Heart left ventricle (tissue), 16 donors: ENCODE measurements at regions of chr2 and their contacts with region 1.

Region 1: GRCh38 chr2:42792583-42793333 is at the start of gene HAAO:
- DNase-seq: peak; percentile 57 to 83 (median 65)
- ATAC-seq: peak in 3 of 4 donors; percentile 33 to 61 (median 39)
- H3K4me3 ChIP-seq: peak within 1 kb of the TSS; percentile 47 to 81 (median 60)
- H3K27ac ChIP-seq: peak within 1 kb of the TSS; percentile 69 to 97 (median 84)
- H3K4me1 ChIP-seq: peaks cover 0 to 44% (median 16%) of the 10 kb centered on the region in 12 donors
- H3K27me3 ChIP-seq: peaks cover 0 to 6% (median 0%) of the 10 kb centered on the region in 9 donors
- CTCF ChIP-seq: peak in 8 of 12 donors; percentile 5 to 41 (median 18)
- POLR2A ChIP-seq: peak in 1 of 2 donors; percentile 20
- total RNA-seq, gene HAAO: 1.3 to 10.6 (median 2.2) TPM

Region 2: GRCh38 chr2:42494355-42495233 is 298.2 kb before region 1 on chr2:
- intact Hi-C with region 1: loop called in 1 of 10 experiments (anchors 5 kb)
- DNase-seq: peak; percentile 44 to 69 (median 51)
- ATAC-seq: peak in 3 of 4 donors; percentile 58 to 72 (median 65)
- H3K4me3 ChIP-seq: peak overlapping the region; percentile 40 to 67 (median 56)
- H3K27ac ChIP-seq: no peak overlapping the region
- H3K4me1 ChIP-seq: peaks cover 0 to 22% (median 9%) of the 10 kb centered on the region in 12 donors
- H3K27me3 ChIP-seq: peaks cover 17 to 66% (median 32%) of the 10 kb centered on the region in 9 donors
- CTCF ChIP-seq: peak; percentile 78 to 90 (median 86)
- POLR2A ChIP-seq: no peak